Sigmoid colon (tissue), 7 donors: ENCODE measurements at regions of chr14 and their contacts with region 1.

Region 1: GRCh38 chr14:68979021-68979782 is at the start of gene ACTN1:
- DNase-seq: peak; percentile 99
- H3K4me3 ChIP-seq: peak within 1 kb of the TSS; percentile 85 to 100 (median 97)
- H3K27ac ChIP-seq: peak within 1 kb of the TSS; percentile 98 to 100 (median 100)
- H3K4me1 ChIP-seq: peaks cover 0 to 70% (median 62%) of the 10 kb centered on the region in 4 donors
- H3K27me3 ChIP-seq: no peaks in the 10 kb centered on the region
- CTCF ChIP-seq: no peak
- EP300 ChIP-seq: peak in 1 of 4 donors; percentile 56
- POLR2A ChIP-seq: peak; percentile 87 to 88
- total RNA-seq, gene ACTN1: 372 to 1,069 (median 688) TPM

Region 2: GRCh38 chr14:68749487-68750475 is 229.4 kb before region 1 on chr14:
- intact Hi-C with region 1: no loop called
- DNase-seq: peak; percentile 75
- H3K4me3 ChIP-seq: no peak overlapping the region
- H3K27ac ChIP-seq: peak overlapping the region in 3 of 4 donors; percentile 22 to 65 (median 61)
- H3K4me1 ChIP-seq: peaks cover 0 to 60% (median 36%) of the 10 kb centered on the region in 4 donors
- H3K27me3 ChIP-seq: no peaks in the 10 kb centered on the region
- CTCF ChIP-seq: no peak
- EP300 ChIP-seq: no peak
- POLR2A ChIP-seq: no peak

Region 3: DNA sequence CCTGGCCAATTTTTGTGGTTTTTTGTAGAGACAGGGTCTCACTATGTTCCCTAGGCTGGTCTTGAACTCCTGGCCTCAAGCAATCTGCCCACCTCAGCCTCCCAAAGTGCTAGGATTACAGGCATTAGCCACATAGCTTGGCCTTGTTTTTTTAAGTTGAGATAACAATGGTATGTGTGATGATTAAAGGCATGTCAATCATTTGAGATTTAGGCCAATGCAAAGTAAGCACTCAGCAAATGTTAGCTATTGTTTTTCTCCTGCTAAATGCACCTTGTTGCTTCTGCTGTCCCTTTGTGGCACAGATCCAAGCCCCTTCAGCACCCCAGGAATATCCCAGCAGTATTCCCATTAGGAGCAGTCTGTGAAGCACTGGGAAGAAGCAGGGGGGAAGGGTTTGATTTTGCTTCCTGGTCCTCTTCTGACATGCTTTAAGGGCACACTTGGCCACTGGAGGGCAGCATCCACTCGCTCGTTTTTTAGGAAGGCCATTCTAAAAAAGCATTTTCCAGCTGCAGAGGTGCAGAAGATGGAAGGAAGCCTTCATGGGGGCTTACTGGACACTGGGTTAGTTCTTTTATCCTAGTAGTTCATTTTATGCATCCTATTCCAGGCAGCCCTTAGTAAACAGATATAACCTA is 116.1 kb before region 1 on chr14:
- intact Hi-C with region 1: no loop called
- DNase-seq: peak; percentile 88
- H3K4me3 ChIP-seq: no peak overlapping the region
- H3K27ac ChIP-seq: peak overlapping the region in 1 of 4 donors; percentile 37
- H3K4me1 ChIP-seq: no peaks in the 10 kb centered on the region
- H3K27me3 ChIP-seq: no peaks in the 10 kb centered on the region
- CTCF ChIP-seq: peak; percentile 54 to 74 (median 70)
- EP300 ChIP-seq: no peak
- POLR2A ChIP-seq: no peak

Region 4: GRCh38 chr14:68911594-68912227 is 67.5 kb before region 1 on chr14:
- intact Hi-C with region 1: loop called (anchors 2 kb)
- DNase-seq: peak; percentile 91
- H3K4me3 ChIP-seq: no peak overlapping the region
- H3K27ac ChIP-seq: peak overlapping the region; percentile 98 to 100 (median 100)
- H3K4me1 ChIP-seq: peaks cover 0 to 95% (median 87%) of the 10 kb centered on the region in 4 donors
- H3K27me3 ChIP-seq: no peaks in the 10 kb centered on the region
- CTCF ChIP-seq: peak; percentile 96 to 99 (median 97)
- EP300 ChIP-seq: no peak
- POLR2A ChIP-seq: no peak

Region 5: GRCh38 chr14:68951042-68951914 is 27.9 kb before region 1 on chr14:
- intact Hi-C with region 1: loop called (anchors 1 kb)
- DNase-seq: peak; percentile 99
- H3K4me3 ChIP-seq: peak overlapping the region in 3 of 4 donors; percentile 35 to 41 (median 40)
- H3K27ac ChIP-seq: peak overlapping the region; percentile 98 to 100 (median 100)
- H3K4me1 ChIP-seq: peaks cover 0 to 99% (median 98%) of the 10 kb centered on the region in 4 donors
- H3K27me3 ChIP-seq: no peaks in the 10 kb centered on the region
- CTCF ChIP-seq: no peak
- EP300 ChIP-seq: peak in 2 of 4 donors; percentile 23 to 63
- POLR2A ChIP-seq: no peak

Region 6: GRCh38 chr14:69055999-69056788 is 77.0 kb after region 1 on chr14:
- intact Hi-C with region 1: loop called (anchors 5 kb)
- DNase-seq: no peak
- H3K4me3 ChIP-seq: no peak overlapping the region
- H3K27ac ChIP-seq: peak overlapping the region; percentile 43 to 87 (median 72)
- H3K4me1 ChIP-seq: peaks cover 0 to 58% (median 47%) of the 10 kb centered on the region in 4 donors
- H3K27me3 ChIP-seq: no peaks in the 10 kb centered on the region
- CTCF ChIP-seq: no peak
- EP300 ChIP-seq: peak in 1 of 4 donors; percentile 13
- POLR2A ChIP-seq: no peak

Region 7: DNA sequence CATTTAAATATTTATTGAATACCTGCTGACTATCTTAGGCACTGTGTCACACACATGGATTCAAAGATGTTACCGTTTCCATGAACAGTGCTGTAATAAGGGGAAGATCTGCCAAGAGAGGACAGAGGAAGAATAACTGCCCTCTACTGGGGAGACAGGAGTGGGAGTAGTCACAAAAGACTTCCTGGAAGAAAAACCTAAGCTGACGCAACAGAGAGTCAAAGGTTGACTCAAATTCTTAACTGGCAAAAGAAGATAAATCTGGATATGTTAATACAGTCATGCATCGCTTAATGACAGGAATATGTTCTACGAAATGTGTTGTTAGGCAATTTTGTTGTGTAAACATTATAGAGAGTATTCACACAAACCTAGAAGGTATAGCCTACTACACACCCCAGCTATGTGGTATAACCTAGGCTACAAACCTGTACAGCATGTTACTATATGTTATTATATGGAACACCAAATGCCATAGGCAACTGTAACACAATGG is 122.2 kb after region 1 on chr14:
- intact Hi-C with region 1: loop called (anchors 5 kb)
- DNase-seq: no peak
- H3K4me3 ChIP-seq: no peak overlapping the region
- H3K27ac ChIP-seq: peak overlapping the region; percentile 53 to 75 (median 64)
- H3K4me1 ChIP-seq: peaks cover 0 to 31% (median 23%) of the 10 kb centered on the region in 4 donors
- H3K27me3 ChIP-seq: no peaks in the 10 kb centered on the region
- CTCF ChIP-seq: peak; percentile 54 to 84 (median 70)
- EP300 ChIP-seq: peak in 1 of 4 donors; percentile 45
- POLR2A ChIP-seq: no peak